ENCODE measurements at regions of chr2 and their contacts with region 1.

Region 1: GRCh38 chr2:96407041-96407918 is 71.7 kb downstream of the NCAPH start:
- DNase-seq: peak; percentile 82
- ATAC-seq: peak; percentile 92
- H3K4me3 Mint-ChIP-seq: peak overlapping the region; percentile 57
- H3K27ac Mint-ChIP-seq: peak overlapping the region; percentile 86
- H3K4me1 Mint-ChIP-seq: peaks cover 24% of the 10 kb centered on the region
- H3K27me3 Mint-ChIP-seq: no peaks in the 10 kb centered on the region

Region 2: DNA sequence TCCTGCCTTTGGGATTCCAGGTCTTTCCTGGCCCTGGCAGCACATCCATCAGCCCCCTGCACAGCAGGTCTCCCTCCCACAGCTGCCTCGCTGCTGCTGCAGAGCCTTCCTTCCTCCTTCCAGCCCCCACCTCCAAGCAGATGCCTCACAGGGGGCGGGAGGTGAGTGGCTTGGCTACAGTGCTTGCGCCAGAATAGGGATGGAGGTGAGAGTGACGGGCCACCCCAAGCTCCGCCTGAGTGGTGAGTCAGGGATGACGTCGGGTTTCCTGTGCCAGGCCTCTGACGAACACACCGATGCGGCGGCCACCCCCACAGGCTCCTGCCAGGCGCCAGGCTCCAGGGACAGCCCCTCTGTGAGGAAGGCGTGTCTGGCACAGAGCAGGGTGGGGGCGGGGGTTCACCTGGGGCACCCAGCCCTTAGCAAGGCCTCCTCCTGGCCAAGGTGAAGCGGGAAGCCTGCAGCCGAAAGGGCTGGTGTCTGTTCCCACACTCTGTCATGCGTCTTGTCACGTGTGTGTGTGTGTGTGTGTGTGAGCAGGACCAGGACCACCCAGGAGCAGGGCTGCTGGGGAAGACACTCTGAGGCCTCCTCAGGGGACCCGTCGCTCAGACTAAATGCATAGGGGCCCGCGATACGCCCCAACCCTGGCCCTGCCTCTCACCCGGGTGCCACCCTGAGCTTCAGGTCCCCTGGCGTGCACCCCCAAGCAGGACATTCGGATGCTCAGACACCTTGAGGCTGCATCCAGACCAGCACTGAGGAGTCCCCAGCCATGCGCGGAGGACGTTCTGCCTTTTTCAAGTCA is 258.7 kb before region 1 on chr2:
- CTCF ChIA-PET with region 1: no interaction called
- POLR2A ChIA-PET with region 1: no interaction called
- DNase-seq: peak; percentile 96
- ATAC-seq: peak; percentile 61
- H3K4me3 Mint-ChIP-seq: peak overlapping the region; percentile 42
- H3K27ac Mint-ChIP-seq: peak overlapping the region; percentile 97
- H3K4me1 Mint-ChIP-seq: peaks cover 75% of the 10 kb centered on the region
- H3K27me3 Mint-ChIP-seq: no peaks in the 10 kb centered on the region

Region 3: GRCh38 chr2:96389736-96390135 is 17.5 kb before region 1 on chr2:
- CTCF ChIA-PET with region 1: interaction called, 27 read pairs
- POLR2A ChIA-PET with region 1: no interaction called
- DNase-seq: no peak
- ATAC-seq: no peak
- H3K4me3 Mint-ChIP-seq: no peak overlapping the region
- H3K27ac Mint-ChIP-seq: no peak overlapping the region
- H3K4me1 Mint-ChIP-seq: peaks cover 14% of the 10 kb centered on the region
- H3K27me3 Mint-ChIP-seq: no peaks in the 10 kb centered on the region

Region 4: DNA sequence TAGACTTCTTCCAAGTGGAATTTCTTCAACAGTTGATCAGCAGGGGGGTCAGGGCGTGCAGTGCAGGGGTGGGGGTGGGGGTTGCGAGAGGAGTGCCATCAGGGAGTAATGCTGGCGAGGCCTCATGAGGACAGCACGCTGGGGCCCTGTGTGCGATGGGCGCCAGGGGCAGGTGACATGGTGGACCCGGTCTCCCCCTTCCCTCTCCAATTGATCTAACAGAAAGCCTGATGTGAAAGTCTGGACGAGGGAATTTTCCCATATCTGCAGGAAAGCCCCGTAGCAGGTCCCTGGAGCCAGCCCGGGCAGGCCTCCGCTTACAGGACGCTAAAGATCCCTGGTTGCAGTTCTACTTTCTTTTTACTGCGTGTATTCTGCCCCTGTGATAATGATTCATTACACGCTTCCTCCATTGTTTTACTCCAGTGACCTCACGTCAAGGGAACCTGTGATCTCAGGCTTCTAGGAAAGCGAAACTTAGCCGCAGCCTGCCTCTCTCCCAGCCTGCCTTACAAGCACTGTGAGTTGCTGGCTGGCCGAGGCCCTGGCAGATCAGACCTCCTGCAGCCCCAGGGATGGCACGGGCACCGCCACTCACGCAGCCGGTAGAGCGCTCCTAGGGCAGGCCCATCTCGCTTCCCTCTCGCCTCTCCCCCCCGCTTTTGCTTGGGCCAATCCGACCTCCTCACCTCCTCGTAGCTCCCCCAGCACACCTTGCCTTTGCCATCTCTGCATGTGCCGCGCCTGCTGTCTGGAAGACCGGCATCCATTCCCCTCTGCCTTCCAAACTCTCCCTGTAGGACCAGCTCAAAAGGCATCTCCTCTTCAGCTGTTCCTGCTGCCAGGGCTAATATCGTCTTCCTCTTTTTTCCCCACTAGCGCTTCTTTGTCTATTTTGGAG is 78.7 kb after region 1 on chr2:
- CTCF ChIA-PET with region 1: interaction called, 18 read pairs
- POLR2A ChIA-PET with region 1: interaction called, 3 read pairs
- DNase-seq: peak; percentile 93
- ATAC-seq: peak; percentile 98
- H3K4me3 Mint-ChIP-seq: peak overlapping the region; percentile 87
- H3K27ac Mint-ChIP-seq: peak overlapping the region; percentile 98
- H3K4me1 Mint-ChIP-seq: peaks cover 44% of the 10 kb centered on the region
- H3K27me3 Mint-ChIP-seq: no peaks in the 10 kb centered on the region

Region 5: GRCh38 chr2:96509114-96509846 is 102.0 kb after region 1 on chr2:
- CTCF ChIA-PET with region 1: interaction called, 162 read pairs
- POLR2A ChIA-PET with region 1: interaction called, 4 read pairs
- DNase-seq: peak; percentile 69
- ATAC-seq: peak; percentile 36
- H3K4me3 Mint-ChIP-seq: no peak overlapping the region
- H3K27ac Mint-ChIP-seq: peak overlapping the region; percentile 7
- H3K4me1 Mint-ChIP-seq: peaks cover 15% of the 10 kb centered on the region
- H3K27me3 Mint-ChIP-seq: peaks cover 15% of the 10 kb centered on the region

Region 6: GRCh38 chr2:96536445-96537065 is 129.3 kb after region 1 on chr2 and contains the start of gene ARID5A:
- CTCF ChIA-PET with region 1: interaction called, 26 read pairs
- POLR2A ChIA-PET with region 1: interaction called, 4 read pairs
- DNase-seq: peak; percentile 95
- ATAC-seq: peak; percentile 65
- H3K4me3 Mint-ChIP-seq: peak within 1 kb of the TSS; percentile 83
- H3K27ac Mint-ChIP-seq: peak within 1 kb of the TSS; percentile 82
- H3K4me1 Mint-ChIP-seq: peaks cover 63% of the 10 kb centered on the region
- H3K27me3 Mint-ChIP-seq: no peaks in the 10 kb centered on the region
- total RNA-seq, gene ARID5A: 37.7 to 40.1 TPM

Measured in activated CD8-positive, alpha-beta T cell treated with anti-CD3 and anti-CD28 coated beads, Interleukin-2, amount 10 ng/mL, durations not matched to agents 7 days and 5 days (primary cell).